ENCODE measurements at regions of chr11 and their contacts with region 1.

Region 1: DNA sequence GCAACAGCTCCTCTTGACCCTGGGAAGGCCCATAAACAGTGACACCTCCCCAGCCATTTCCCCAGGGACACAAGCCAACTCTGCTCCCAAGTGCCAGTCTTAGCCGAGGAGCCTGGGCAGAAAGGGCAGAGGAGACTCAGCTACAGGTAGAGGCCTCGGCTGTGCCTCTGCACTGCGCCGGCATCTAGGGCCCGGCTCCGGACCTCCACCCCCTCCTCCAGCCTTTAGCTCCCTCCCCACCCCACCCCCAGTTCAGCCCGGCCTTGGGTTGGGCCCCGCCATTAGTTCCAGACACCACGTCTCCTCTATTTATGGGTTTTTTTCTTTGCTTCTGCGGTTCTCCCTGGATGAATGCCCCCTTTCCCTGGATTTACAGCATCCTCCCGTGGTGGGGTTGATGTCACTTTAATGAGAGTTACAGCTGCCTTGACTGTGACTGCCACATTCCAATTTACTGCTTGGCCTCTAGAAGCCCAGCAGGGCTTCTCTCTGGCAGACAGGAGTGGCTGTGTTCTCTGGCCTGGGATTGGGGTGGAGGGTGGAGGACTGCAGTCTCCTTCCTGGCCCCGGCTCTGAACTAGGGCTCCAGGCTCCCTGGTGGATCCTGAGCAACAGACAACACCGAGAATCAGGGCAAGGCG is 13.5 kb upstream of the OAF start:
- DNase-seq: peak; percentile 66
- ATAC-seq: peak; percentile 63
- H3K4me3 ChIP-seq: peak overlapping the region; percentile 28 to 58 (median 34); a peak in 5 of 6 replicates
- H3K27ac ChIP-seq: peak overlapping the region; percentile 77
- H3K4me1 ChIP-seq: peaks cover 97% of the 10 kb centered on the region
- H3K27me3 ChIP-seq: no peaks in the 10 kb centered on the region
- CTCF ChIP-seq: no peak
- EP300 ChIP-seq: no peak
- POLR2A ChIP-seq: no peak
- RAD21 ChIP-seq: no peak

Region 2: GRCh38 chr11:120068114-120068573 is 129.2 kb before region 1 on chr11:
- CTCF ChIA-PET with region 1: no interaction called
- POLR2A ChIA-PET with region 1: no interaction called
- in situ Hi-C with region 1: no loop called
- intact Hi-C with region 1: no loop called
- DNase-seq: no peak
- ATAC-seq: no peak
- H3K4me3 ChIP-seq: no peak overlapping the region
- H3K27ac ChIP-seq: no peak overlapping the region
- H3K4me1 ChIP-seq: no peaks in the 10 kb centered on the region
- H3K27me3 ChIP-seq: peaks cover 8 to 46% of the 10 kb centered on the region in 2 experiments; a peak in 4 of 5 replicates
- CTCF ChIP-seq: no peak
- EP300 ChIP-seq: no peak
- POLR2A ChIP-seq: no peak
- RAD21 ChIP-seq: no peak

Region 3: GRCh38 chr11:120210626-120211521 is 13.5 kb after region 1 on chr11 and contains the start of gene OAF:
- CTCF ChIA-PET with region 1: no interaction called
- POLR2A ChIA-PET with region 1: interaction called, 72 read pairs
- in situ Hi-C with region 1: no loop called
- intact Hi-C with region 1: loop called (anchors 1 kb)
- DNase-seq: peak; percentile 86
- ATAC-seq: peak; percentile 74
- H3K4me3 ChIP-seq: peak within 1 kb of the TSS; percentile 74 to 87 (median 86)
- H3K27ac ChIP-seq: peak within 1 kb of the TSS; percentile 66
- H3K4me1 ChIP-seq: peaks cover 81% of the 10 kb centered on the region
- H3K27me3 ChIP-seq: no peaks in the 10 kb centered on the region
- CTCF ChIP-seq: 0 out of 2 replicates have a peak, but pooled peaks have one; percentile 2
- EP300 ChIP-seq: peak in 1 of 2 experiments; percentile 27; a peak in 1 of 4 replicates
- POLR2A ChIP-seq: peak in 1 of 2 experiments; percentile 66; a peak in 3 of 4 replicates
- RAD21 ChIP-seq: peak; percentile 80
- total RNA-seq, gene OAF: 37.5 and 63.7 TPM in 2 replicates

Region 4: GRCh38 chr11:120303004-120303637 is 105.8 kb after region 1 on chr11:
- CTCF ChIA-PET with region 1: no interaction called
- POLR2A ChIA-PET with region 1: no interaction called
- in situ Hi-C with region 1: no loop called
- intact Hi-C with region 1: no loop called
- DNase-seq: peak; percentile 69
- ATAC-seq: peak; percentile 88
- H3K4me3 ChIP-seq: no peak overlapping the region
- H3K27ac ChIP-seq: no peak overlapping the region
- H3K4me1 ChIP-seq: no peaks in the 10 kb centered on the region
- H3K27me3 ChIP-seq: peaks cover 0 to 62% of the 10 kb centered on the region in 2 experiments; a peak in 4 of 5 replicates
- CTCF ChIP-seq: peak; percentile 93
- EP300 ChIP-seq: no peak
- POLR2A ChIP-seq: no peak
- RAD21 ChIP-seq: peak; percentile 74

Measured in HepG2 (cell line).